ENCODE measurements at regions of chr13 and their contacts with region 1.

Region 1: DNA sequence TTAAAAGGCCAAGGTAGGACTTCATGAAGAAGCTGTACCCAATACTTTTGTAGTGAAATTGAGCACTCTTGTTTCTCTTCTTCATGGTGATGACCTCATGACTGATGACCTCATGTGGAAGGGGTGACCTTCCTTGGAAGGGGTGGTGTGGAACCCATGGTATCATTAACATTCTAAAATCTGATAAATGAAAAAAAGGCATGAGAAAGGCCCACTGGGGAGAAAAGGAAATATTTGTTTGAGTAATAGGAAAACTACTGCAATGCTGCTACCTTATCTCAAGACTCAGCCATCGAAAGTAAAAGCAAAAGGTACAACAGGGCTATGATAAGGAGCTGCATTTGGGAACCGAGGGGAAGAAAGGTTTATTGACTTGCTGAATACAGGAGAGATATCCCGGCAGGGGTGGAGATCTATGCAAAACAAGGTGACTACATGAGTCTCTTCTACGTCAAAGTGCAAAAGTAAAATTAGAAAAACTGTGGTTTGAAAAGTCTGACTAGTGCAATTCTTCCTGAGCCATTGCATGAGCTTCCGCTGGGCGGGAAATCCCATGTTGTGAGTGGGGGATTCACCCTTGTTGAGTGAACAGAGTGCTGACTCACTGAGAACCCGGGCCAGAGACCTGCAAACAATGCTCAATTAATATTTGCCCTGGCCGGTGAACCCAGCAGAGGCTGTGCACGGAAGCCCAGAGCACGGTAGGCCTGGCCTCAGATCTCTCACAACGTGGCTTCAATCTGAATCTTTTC is 138.9 kb upstream of the RFC3 start:
- DNase-seq: peak; percentile 88
- CTCF ChIP-seq: no peak

Region 2: GRCh38 chr13:33690354-33690753 is 11.3 kb after region 1 on chr13:
- CTCF ChIA-PET with region 1: interaction called, 15 read pairs
- POLR2A ChIA-PET with region 1: no interaction called
- DNase-seq: no peak
- CTCF ChIP-seq: no peak

Region 3: DNA sequence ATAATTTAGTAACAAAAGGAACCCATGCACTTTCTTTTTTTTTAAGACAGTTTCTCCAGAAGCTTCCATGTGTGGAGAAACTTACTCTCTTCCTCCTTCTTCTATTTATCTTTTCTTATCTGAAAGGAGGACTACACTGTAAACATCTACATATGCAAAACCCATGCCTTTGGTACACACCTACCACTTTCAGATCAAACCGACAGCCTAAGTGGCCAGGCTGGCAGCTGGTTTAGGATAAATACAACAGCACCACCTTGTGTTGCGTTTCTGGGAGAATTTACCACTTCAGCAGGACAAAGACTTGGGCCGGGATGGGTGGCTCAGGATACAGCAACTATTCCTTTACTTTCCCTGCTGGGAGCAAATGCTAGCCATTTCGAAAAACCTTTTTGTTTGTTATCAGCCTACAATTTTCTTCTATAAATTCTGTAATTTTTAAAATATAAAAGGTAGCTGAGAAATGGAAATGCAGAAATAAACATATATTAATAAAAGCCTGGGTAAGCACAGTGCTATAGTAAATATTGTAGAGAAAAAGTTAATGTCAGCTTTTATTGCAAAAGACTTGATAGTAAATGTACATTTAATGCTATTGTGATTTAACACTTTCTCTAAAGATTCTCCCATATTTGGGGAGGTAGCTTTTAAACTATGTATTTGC is 44.8 kb after region 1 on chr13:
- CTCF ChIA-PET with region 1: interaction called, 21 read pairs
- POLR2A ChIA-PET with region 1: interaction called, 3 read pairs
- DNase-seq: peak; percentile 56
- CTCF ChIP-seq: peak; percentile 76

Measured in GM10248 (cell line).